ENCODE measurements at regions of chr3 and their contacts with region 1.

Region 1: GRCh38 chr3:153291056-153291685 is 129.1 kb downstream of the RAP2B start:
- DNase-seq: no peak
- H3K4me3 ChIP-seq: no peak overlapping the region
- H3K27ac ChIP-seq: no peak overlapping the region
- H3K4me1 ChIP-seq: no peaks in the 10 kb centered on the region
- H3K27me3 ChIP-seq: no peaks in the 10 kb centered on the region
- CTCF ChIP-seq: peak; percentile 34

Region 2: DNA sequence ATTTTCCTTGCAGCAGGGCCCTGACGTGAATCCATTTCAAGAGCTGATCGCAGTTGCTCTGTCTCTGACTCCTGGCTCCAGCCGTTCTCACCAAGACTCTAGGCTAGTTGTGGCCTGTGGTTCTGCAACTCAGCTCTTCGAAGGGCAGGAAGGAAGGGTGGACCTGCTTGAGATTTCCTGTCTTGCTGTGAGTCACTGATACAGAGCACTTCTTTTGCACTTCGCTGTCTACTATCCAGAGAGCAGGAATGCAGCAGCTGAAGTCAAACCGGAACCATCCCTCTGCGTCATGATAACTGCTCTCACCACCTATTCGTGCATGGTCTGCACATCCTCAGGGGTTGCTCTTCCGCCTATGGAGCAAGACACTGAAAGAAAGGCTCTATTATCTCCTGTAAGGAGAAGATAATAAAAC is 69.4 kb before region 1 on chr3:
- intact Hi-C with region 1: no loop called
- DNase-seq: peak; percentile 38
- H3K4me3 ChIP-seq: no peak overlapping the region
- H3K27ac ChIP-seq: peak overlapping the region; percentile 22
- H3K4me1 ChIP-seq: no peaks in the 10 kb centered on the region
- H3K27me3 ChIP-seq: no peaks in the 10 kb centered on the region
- CTCF ChIP-seq: no peak

Region 3: GRCh38 chr3:153595186-153595815 is 304.1 kb after region 1 on chr3:
- intact Hi-C with region 1: loop called (anchors 10 kb)
- DNase-seq: no peak
- H3K4me3 ChIP-seq: no peak overlapping the region
- H3K27ac ChIP-seq: no peak overlapping the region
- H3K4me1 ChIP-seq: no peaks in the 10 kb centered on the region
- H3K27me3 ChIP-seq: no peaks in the 10 kb centered on the region
- CTCF ChIP-seq: peak; percentile 40

Measured in colonic mucosa (tissue), 4 donors.